ENCODE measurements at regions of chr16 and their contacts with region 1.

Region 1: GRCh38 chr16:55944377-55944802 is 69.2 kb upstream of the CES5A start:
- DNase-seq: peak; percentile 79 to 80
- ATAC-seq: peak; percentile 94
- H3K4me3 ChIP-seq: no peak overlapping the region
- H3K27ac ChIP-seq: no peak overlapping the region
- H3K4me1 ChIP-seq: no peaks in the 10 kb centered on the region
- H3K27me3 ChIP-seq: no peaks in the 10 kb centered on the region

Region 2: DNA sequence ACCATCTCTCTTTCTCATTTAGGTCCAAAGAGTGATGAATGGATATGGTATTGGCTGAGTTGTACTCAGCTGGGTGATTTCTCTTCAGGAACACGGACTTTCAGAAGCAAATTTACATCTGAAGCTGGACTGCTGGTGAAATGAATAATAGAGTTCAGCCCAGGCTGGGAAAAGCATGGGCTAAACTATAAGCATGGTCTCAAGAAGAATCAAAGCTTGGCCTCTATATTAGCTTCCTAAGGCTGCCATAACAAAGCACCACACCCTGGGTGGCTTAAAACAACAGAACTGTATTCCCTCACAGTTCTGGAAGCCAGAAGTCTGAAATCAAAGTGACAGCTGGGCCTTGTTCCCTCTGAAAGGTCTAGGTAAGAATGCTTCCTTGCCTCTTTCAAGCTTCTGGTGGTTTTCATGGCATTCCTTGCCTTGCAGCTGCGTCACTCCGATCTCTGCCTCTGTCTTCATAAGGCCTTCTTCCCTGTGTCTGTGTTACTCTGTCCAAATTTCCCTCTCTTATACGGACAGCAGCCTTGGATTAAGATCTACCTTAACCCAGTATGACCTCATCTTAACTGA is 20.6 kb after region 1 on chr16:
- intact Hi-C with region 1: no loop called
- DNase-seq: no peak
- ATAC-seq: no peak
- H3K4me3 ChIP-seq: no peak overlapping the region
- H3K27ac ChIP-seq: no peak overlapping the region
- H3K4me1 ChIP-seq: no peaks in the 10 kb centered on the region
- H3K27me3 ChIP-seq: no peaks in the 10 kb centered on the region

Region 3: GRCh38 chr16:56356276-56357240 is 412.2 kb after region 1 on chr16:
- intact Hi-C with region 1: loop called in 1 of 2 experiments (anchors 5 kb)
- DNase-seq: peak; percentile 87 to 93
- ATAC-seq: peak; percentile 93
- H3K4me3 ChIP-seq: peak overlapping the region; percentile 43 to 54
- H3K27ac ChIP-seq: no peak overlapping the region
- H3K4me1 ChIP-seq: no peaks in the 10 kb centered on the region
- H3K27me3 ChIP-seq: no peaks in the 10 kb centered on the region